CD4-positive, alpha-beta T cell (primary cell): ENCODE measurements at regions of chr6 and their contacts with region 1.

Region 1: DNA sequence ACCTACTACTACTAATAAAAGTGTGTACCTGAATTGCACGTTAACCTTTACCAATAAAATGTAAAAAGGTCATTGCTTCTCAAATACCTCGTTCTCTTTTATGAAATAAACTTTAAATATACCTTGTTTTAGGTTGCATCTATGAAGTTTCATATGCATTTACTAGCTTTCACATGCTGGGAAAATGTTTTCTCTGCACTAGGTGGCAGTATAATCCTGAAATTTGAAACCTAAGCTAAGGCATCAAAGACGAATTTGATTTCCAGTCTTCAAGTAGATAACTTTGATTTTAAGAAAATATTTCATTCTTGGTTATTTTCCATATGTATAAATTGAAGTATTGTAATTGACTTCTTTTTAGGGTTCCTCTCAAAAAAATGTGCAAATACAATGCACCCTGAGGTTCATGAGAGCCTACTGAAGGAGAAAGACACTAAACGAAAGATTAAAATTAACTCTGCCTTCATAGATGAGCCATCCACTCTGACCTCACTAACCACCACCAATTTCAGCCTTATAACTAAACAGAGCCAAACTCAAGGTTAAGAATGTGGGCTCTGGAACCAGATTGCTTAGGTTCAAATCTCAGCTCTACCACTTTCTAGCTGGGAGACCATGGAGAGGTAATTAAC is 7.3 kb upstream of the COL9A1 start:
- DNase-seq: peak in 3 of 14 experiments; percentile 39 to 44 (median 40)
- ATAC-seq: no peak
- H3K4me3 ChIP-seq: no peak overlapping the region
- H3K4me3 Mint-ChIP-seq: no peak overlapping the region
- H3K27ac ChIP-seq: no peak overlapping the region
- H3K27ac Mint-ChIP-seq: no peak overlapping the region
- H3K4me1 ChIP-seq: no peaks in the 10 kb centered on the region
- H3K4me1 Mint-ChIP-seq: no peaks in the 10 kb centered on the region
- H3K27me3 ChIP-seq: peaks cover 0 to 6% of the 10 kb centered on the region in 2 experiments
- H3K27me3 Mint-ChIP-seq: peaks cover 39% of the 10 kb centered on the region
- CTCF ChIP-seq: peak; percentile 60

Region 2: DNA sequence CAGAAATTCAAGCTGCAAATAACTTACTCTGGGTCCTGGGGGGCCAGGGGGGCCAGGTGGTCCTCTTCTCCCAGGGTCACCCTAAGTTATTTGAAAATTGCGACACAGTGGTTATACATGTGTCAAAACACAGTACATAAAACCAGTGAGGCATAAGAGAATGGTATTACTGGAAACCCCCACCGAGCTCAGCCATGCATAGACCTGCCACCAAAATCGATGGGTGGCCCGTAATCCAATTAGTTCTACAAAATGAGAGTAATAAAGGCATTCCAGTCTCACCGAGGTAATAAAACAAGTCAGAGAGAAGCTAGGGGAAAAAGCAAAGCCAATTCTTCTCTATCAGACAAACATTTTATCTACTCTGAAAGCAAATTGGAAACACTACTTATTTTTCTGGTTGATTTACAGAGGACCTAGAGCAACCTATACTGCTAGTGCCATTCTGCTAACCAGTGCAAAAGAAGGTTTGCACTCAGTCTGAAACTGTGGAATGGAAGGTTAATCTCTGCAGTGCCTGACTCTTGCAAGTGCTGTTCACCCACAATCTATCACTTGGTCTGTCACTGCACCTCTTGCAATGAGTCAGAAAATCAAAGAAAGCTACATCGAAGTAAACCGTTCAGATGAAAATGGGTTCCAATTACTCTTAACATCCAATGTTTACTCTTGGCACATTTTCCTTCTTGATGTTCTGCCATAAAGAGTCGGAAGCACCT is 39.7 kb before region 1 on chr6:
- CTCF ChIA-PET with region 1: no interaction called
- POLR2A ChIA-PET with region 1: no interaction called
- intact Hi-C with region 1: no loop called
- DNase-seq: no peak
- ATAC-seq: no peak
- H3K4me3 ChIP-seq: no peak overlapping the region
- H3K4me3 Mint-ChIP-seq: no peak overlapping the region
- H3K27ac ChIP-seq: no peak overlapping the region
- H3K27ac Mint-ChIP-seq: no peak overlapping the region
- H3K4me1 ChIP-seq: no peaks in the 10 kb centered on the region
- H3K4me1 Mint-ChIP-seq: no peaks in the 10 kb centered on the region
- H3K27me3 ChIP-seq: peaks cover 0 to 4% of the 10 kb centered on the region in 2 experiments
- H3K27me3 Mint-ChIP-seq: peaks cover 14% of the 10 kb centered on the region
- CTCF ChIP-seq: no peak

Region 3: GRCh38 chr6:70285201-70285600 is 25.0 kb before region 1 on chr6:
- CTCF ChIA-PET with region 1: no interaction called
- POLR2A ChIA-PET with region 1: no interaction called
- intact Hi-C with region 1: no loop called
- DNase-seq: no peak
- ATAC-seq: no peak
- H3K4me3 ChIP-seq: no peak overlapping the region
- H3K4me3 Mint-ChIP-seq: no peak overlapping the region
- H3K27ac ChIP-seq: no peak overlapping the region
- H3K27ac Mint-ChIP-seq: no peak overlapping the region
- H3K4me1 ChIP-seq: peaks cover 3% of the 10 kb centered on the region
- H3K4me1 Mint-ChIP-seq: no peaks in the 10 kb centered on the region
- H3K27me3 ChIP-seq: peaks cover 28 to 35% of the 10 kb centered on the region in 2 experiments
- H3K27me3 Mint-ChIP-seq: peaks cover 39% of the 10 kb centered on the region
- CTCF ChIP-seq: no peak

Region 4: DNA sequence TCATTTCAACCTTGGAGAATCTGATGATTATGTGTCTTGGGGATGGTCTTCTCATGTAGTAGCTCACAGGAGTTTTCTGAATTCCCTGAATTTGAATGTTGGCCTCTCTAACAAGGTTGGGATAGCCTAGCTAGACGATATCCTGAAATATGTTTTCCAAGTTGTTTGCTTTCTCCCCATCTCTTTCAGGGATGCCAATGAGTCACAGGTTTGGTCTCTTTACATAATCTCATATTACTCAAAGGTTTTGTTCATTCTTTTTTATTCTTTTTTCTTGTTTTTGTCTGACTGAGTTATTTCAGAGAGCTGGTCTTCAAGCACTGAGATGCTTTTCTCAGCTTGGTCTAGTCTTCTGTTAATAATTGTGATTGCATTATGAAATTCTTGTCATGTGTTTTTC is 35.4 kb after region 1 on chr6:
- CTCF ChIA-PET with region 1: no interaction called
- POLR2A ChIA-PET with region 1: no interaction called
- intact Hi-C with region 1: no loop called
- DNase-seq: no peak
- ATAC-seq: no peak
- H3K4me3 ChIP-seq: no peak overlapping the region
- H3K4me3 Mint-ChIP-seq: no peak overlapping the region
- H3K27ac ChIP-seq: no peak overlapping the region
- H3K27ac Mint-ChIP-seq: no peak overlapping the region
- H3K4me1 ChIP-seq: no peaks in the 10 kb centered on the region
- H3K4me1 Mint-ChIP-seq: no peaks in the 10 kb centered on the region
- H3K27me3 ChIP-seq: peaks cover 0 to 5% of the 10 kb centered on the region in 2 experiments
- H3K27me3 Mint-ChIP-seq: peaks cover 18% of the 10 kb centered on the region
- CTCF ChIP-seq: no peak

Region 5: DNA sequence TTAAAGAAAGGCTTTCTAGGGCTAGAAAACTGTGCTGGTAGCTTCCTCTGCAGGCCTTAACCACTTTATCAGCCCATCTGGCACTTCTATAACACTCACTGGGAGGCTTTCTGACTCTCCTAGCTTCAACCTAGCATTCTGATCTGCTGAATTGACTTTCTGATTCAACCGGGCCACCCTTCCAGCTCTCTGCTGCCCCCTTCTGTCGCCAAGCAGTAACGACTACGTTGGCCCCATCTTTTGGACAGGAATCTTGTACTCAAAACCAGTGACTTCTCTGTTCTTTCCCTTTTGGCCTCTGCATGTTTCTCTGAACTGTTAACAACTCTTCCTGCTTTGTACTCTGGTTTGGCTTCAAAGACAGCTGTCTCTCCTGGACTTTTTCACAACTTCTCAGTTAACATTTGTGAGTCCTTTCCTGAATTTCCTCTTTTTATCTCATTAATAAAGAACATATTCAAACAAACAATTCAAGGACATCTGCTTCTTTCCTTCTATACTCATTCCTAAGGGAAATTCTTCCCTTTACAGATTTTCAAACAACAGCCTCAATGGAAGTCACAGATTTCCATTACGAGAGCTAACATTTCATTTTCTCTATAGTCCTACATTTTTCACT is 59.3 kb after region 1 on chr6:
- CTCF ChIA-PET with region 1: interaction called, 3 read pairs
- POLR2A ChIA-PET with region 1: no interaction called
- intact Hi-C with region 1: loop called in 1 of 2 experiments (anchors 2 kb)
- DNase-seq: peak; percentile 40 to 82 (median 51)
- ATAC-seq: peak; percentile 90
- H3K4me3 ChIP-seq: no peak overlapping the region
- H3K4me3 Mint-ChIP-seq: no peak overlapping the region
- H3K27ac ChIP-seq: no peak overlapping the region
- H3K27ac Mint-ChIP-seq: no peak overlapping the region
- H3K4me1 ChIP-seq: peaks cover 3% of the 10 kb centered on the region
- H3K4me1 Mint-ChIP-seq: no peaks in the 10 kb centered on the region
- H3K27me3 ChIP-seq: no peaks in the 10 kb centered on the region
- H3K27me3 Mint-ChIP-seq: peaks cover 24% of the 10 kb centered on the region
- CTCF ChIP-seq: peak; percentile 86

Region 6: DNA sequence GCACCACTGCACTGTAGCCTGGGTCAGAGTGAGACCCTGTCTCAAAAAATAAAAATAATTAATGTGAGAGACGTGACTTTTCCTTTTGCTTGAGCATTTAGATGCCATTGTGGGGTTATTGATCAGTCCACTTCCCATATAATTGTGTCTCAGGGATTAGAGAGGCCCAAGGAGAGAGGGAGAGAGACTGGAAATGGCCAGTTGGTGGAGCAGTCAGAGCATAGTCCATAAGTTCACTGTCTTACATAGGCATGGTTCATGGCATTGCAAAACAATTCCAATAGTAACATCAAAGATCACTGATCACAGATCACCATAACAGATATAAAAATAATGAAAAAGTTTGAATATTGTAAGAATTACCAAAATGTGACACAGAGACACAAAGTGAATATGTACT is 241.4 kb after region 1 on chr6:
- CTCF ChIA-PET with region 1: no interaction called
- POLR2A ChIA-PET with region 1: no interaction called
- intact Hi-C with region 1: no loop called
- DNase-seq: no peak
- ATAC-seq: no peak
- H3K4me3 ChIP-seq: no peak overlapping the region
- H3K4me3 Mint-ChIP-seq: no peak overlapping the region
- H3K27ac ChIP-seq: no peak overlapping the region
- H3K27ac Mint-ChIP-seq: no peak overlapping the region
- H3K4me1 ChIP-seq: no peaks in the 10 kb centered on the region
- H3K4me1 Mint-ChIP-seq: no peaks in the 10 kb centered on the region
- H3K27me3 ChIP-seq: no peaks in the 10 kb centered on the region
- H3K27me3 Mint-ChIP-seq: no peaks in the 10 kb centered on the region
- CTCF ChIP-seq: no peak

Region 7: GRCh38 chr6:71375676-71376075 is 1065.5 kb after region 1 on chr6:
- CTCF ChIA-PET with region 1: no interaction called
- POLR2A ChIA-PET with region 1: no interaction called
- intact Hi-C with region 1: loop called in 1 of 2 experiments (anchors 10 kb)
- DNase-seq: no peak
- ATAC-seq: no peak
- H3K4me3 ChIP-seq: no peak overlapping the region
- H3K4me3 Mint-ChIP-seq: no peak overlapping the region
- H3K27ac ChIP-seq: no peak overlapping the region
- H3K27ac Mint-ChIP-seq: no peak overlapping the region
- H3K4me1 ChIP-seq: no peaks in the 10 kb centered on the region
- H3K4me1 Mint-ChIP-seq: no peaks in the 10 kb centered on the region
- H3K27me3 ChIP-seq: no peaks in the 10 kb centered on the region
- H3K27me3 Mint-ChIP-seq: peaks cover 13% of the 10 kb centered on the region
- CTCF ChIP-seq: no peak